Calu3 (cell line): ENCODE measurements at regions of chr17 and their contacts with region 1.

Region 1: GRCh38 chr17:30812218-30813177 is 12.0 kb downstream of the CRLF3 start:
- DNase-seq: no peak
- H3K4me3 Mint-ChIP-seq: no peak overlapping the region
- H3K27ac Mint-ChIP-seq: no peak overlapping the region
- H3K4me1 Mint-ChIP-seq: peaks cover 7% of the 10 kb centered on the region
- H3K27me3 Mint-ChIP-seq: no peaks in the 10 kb centered on the region
- CTCF ChIP-seq: no peak

Region 2: GRCh38 chr17:30780343-30780742 is 32.2 kb before region 1 on chr17:
- CTCF ChIA-PET with region 1: interaction called, 15 read pairs
- intact Hi-C with region 1: no loop called
- DNase-seq: no peak
- H3K4me3 Mint-ChIP-seq: no peak overlapping the region
- H3K27ac Mint-ChIP-seq: no peak overlapping the region
- H3K4me1 Mint-ChIP-seq: no peaks in the 10 kb centered on the region
- H3K27me3 Mint-ChIP-seq: no peaks in the 10 kb centered on the region
- CTCF ChIP-seq: no peak

Region 3: GRCh38 chr17:30796016-30796415 is 16.5 kb before region 1 on chr17:
- CTCF ChIA-PET with region 1: no interaction called
- intact Hi-C with region 1: no loop called
- DNase-seq: no peak
- H3K4me3 Mint-ChIP-seq: no peak overlapping the region
- H3K27ac Mint-ChIP-seq: no peak overlapping the region
- H3K4me1 Mint-ChIP-seq: no peaks in the 10 kb centered on the region
- H3K27me3 Mint-ChIP-seq: no peaks in the 10 kb centered on the region
- CTCF ChIP-seq: no peak